CD8-positive, alpha-beta T cell (primary cell): ENCODE measurements at regions of chr19 and their contacts with region 1.

Region 1: DNA sequence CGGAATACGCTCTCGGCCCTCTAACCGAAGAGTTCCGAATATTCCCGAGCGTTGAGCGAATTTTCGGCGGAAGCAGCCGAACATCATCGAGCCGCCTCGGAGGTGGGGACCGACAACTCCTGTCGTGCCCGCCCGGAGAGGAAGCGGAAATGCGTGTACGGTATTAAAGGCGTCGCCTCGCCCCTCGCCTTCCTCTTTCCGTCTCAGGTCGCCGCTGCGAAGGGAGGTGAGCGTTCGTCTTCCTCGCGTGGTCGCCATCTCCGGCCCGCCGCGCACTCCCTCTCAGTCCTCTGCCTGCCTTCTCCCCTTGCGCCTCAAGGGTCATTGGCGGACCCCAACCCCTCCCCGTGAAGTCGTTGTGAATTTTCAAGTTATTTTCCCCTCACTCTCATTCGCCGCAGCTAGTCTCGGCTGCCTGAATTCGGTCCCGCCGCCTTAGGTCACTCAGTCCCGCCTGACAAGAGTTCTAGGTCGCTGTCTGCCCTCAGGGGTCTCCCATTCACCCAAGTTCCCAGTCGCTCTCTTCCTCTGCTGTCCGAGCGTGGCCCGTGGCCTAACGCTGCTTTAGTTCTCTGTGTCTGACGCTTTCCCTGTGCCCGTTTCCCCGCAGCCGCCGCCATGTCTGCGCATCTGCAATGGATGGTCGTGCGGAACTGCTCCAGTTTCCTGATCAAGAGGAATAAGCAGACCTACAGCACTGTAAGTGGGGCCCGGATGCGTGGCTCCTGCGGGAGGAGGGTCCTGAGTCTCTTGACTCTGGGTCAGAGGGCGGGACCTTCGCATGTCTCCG is at the start of gene RPL28:
- DNase-seq: peak; percentile 97 to 99 (median 99)
- ATAC-seq: peak; percentile 80
- H3K4me3 ChIP-seq: peak within 1 kb of the TSS; percentile 75 to 94
- H3K4me3 Mint-ChIP-seq: peak within 1 kb of the TSS; percentile 100
- H3K27ac ChIP-seq: peak within 1 kb of the TSS; percentile 95 to 97
- H3K27ac Mint-ChIP-seq: peak within 1 kb of the TSS; percentile 100
- H3K4me1 ChIP-seq: peaks cover 59% of the 10 kb centered on the region
- H3K4me1 Mint-ChIP-seq: peaks cover 75% of the 10 kb centered on the region
- H3K27me3 ChIP-seq: no peaks in the 10 kb centered on the region
- H3K27me3 Mint-ChIP-seq: no peaks in the 10 kb centered on the region
- CTCF ChIP-seq: no peak
- total RNA-seq, gene RPL28: 4,227 to 4,270 TPM

Region 2: GRCh38 chr19:55279770-55280643 is 105.9 kb before region 1 on chr19 and contains the start of gene HSPBP1:
- CTCF ChIA-PET with region 1: no interaction called
- POLR2A ChIA-PET with region 1: interaction called, 6 read pairs
- intact Hi-C with region 1: loop called in 1 of 2 experiments (anchors 1 kb)
- DNase-seq: peak; percentile 87 to 98 (median 95)
- ATAC-seq: peak; percentile 86
- H3K4me3 ChIP-seq: peak within 1 kb of the TSS; percentile 73 to 85
- H3K4me3 Mint-ChIP-seq: peak within 1 kb of the TSS; percentile 96
- H3K27ac ChIP-seq: peak within 1 kb of the TSS; percentile 89 to 90
- H3K27ac Mint-ChIP-seq: peak within 1 kb of the TSS; percentile 98
- H3K4me1 ChIP-seq: peaks cover 32% of the 10 kb centered on the region
- H3K4me1 Mint-ChIP-seq: peaks cover 44% of the 10 kb centered on the region
- H3K27me3 ChIP-seq: no peaks in the 10 kb centered on the region
- H3K27me3 Mint-ChIP-seq: no peaks in the 10 kb centered on the region
- CTCF ChIP-seq: no peak
- total RNA-seq, gene HSPBP1: 18.8 to 18.9 TPM

Region 3: GRCh38 chr19:55643348-55644176 is 257.6 kb after region 1 on chr19 and contains the start of gene ZNF581:
- CTCF ChIA-PET with region 1: no interaction called
- POLR2A ChIA-PET with region 1: interaction called, 3 read pairs
- intact Hi-C with region 1: loop called (anchors 2 to 5 kb)
- DNase-seq: peak; percentile 53 to 91 (median 77)
- ATAC-seq: peak; percentile 55
- H3K4me3 ChIP-seq: peak within 1 kb of the TSS; percentile 66 to 73
- H3K4me3 Mint-ChIP-seq: peak within 1 kb of the TSS; percentile 95
- H3K27ac ChIP-seq: peak within 1 kb of the TSS; percentile 65 to 79
- H3K27ac Mint-ChIP-seq: peak within 1 kb of the TSS; percentile 97
- H3K4me1 ChIP-seq: peaks cover 42% of the 10 kb centered on the region
- H3K4me1 Mint-ChIP-seq: peaks cover 55% of the 10 kb centered on the region
- H3K27me3 ChIP-seq: no peaks in the 10 kb centered on the region
- H3K27me3 Mint-ChIP-seq: no peaks in the 10 kb centered on the region
- CTCF ChIP-seq: no peak
- total RNA-seq, gene ZNF581: 25.6 to 25.7 TPM

Region 4: GRCh38 chr19:55923556-55923955 is 537.6 kb after region 1 on chr19:
- CTCF ChIA-PET with region 1: no interaction called
- POLR2A ChIA-PET with region 1: no interaction called
- intact Hi-C with region 1: no loop called
- DNase-seq: no peak
- ATAC-seq: no peak
- H3K4me3 ChIP-seq: no peak overlapping the region
- H3K4me3 Mint-ChIP-seq: no peak overlapping the region
- H3K27ac ChIP-seq: no peak overlapping the region
- H3K27ac Mint-ChIP-seq: no peak overlapping the region
- H3K4me1 ChIP-seq: no peaks in the 10 kb centered on the region
- H3K4me1 Mint-ChIP-seq: no peaks in the 10 kb centered on the region
- H3K27me3 ChIP-seq: no peaks in the 10 kb centered on the region
- H3K27me3 Mint-ChIP-seq: peaks cover 3% of the 10 kb centered on the region
- CTCF ChIP-seq: no peak